GM12878 (cell line): ENCODE measurements at regions of chr14 and their contacts with region 1.

Region 1: GRCh38 chr14:24093901-24094761 is at the start of gene PCK2:
- DNase-seq: no peak
- ATAC-seq: peak; percentile 79
- H3K4me3 ChIP-seq: peak within 1 kb of the TSS; percentile 98
- H3K27ac ChIP-seq: peak within 1 kb of the TSS; percentile 99
- H3K4me1 ChIP-seq: 0 out of 2 replicates have a peak, but pooled peaks cover 3% of the 10 kb centered on the region
- H3K27me3 ChIP-seq: no peaks in the 10 kb centered on the region
- CTCF ChIP-seq: no peak
- EP300 ChIP-seq: no peak
- POLR2A ChIP-seq: peak; percentile 91
- RAD21 ChIP-seq: no peak
- polyA plus RNA-seq, gene PCK2: 6.6 to 12.3 TPM

Region 2: GRCh38 chr14:24075485-24076301 is 18.4 kb before region 1 on chr14:
- CTCF ChIA-PET with region 1: interaction called, 71 read pairs
- POLR2A ChIA-PET with region 1: interaction called, 33 read pairs
- RAD21 ChIA-PET with region 1: interaction called, 39 read pairs
- SMC1A ChIA-PET with region 1: interaction called, 51 read pairs
- in situ Hi-C with region 1: no loop called
- intact Hi-C with region 1: no loop called
- DNase-seq: no peak
- ATAC-seq: peak; percentile 85
- H3K4me3 ChIP-seq: 0 out of 2 replicates have a peak overlapping the region, but pooled peaks have one; percentile 6
- H3K27ac ChIP-seq: 0 out of 2 replicates have a peak overlapping the region, but pooled peaks have one; percentile 9
- H3K4me1 ChIP-seq: peaks cover 24% of the 10 kb centered on the region
- H3K27me3 ChIP-seq: no peaks in the 10 kb centered on the region
- CTCF ChIP-seq: no peak
- EP300 ChIP-seq: no peak
- POLR2A ChIP-seq: no peak
- RAD21 ChIP-seq: no peak

Region 3: GRCh38 chr14:24080888-24081738 is 13.0 kb before region 1 on chr14:
- CTCF ChIA-PET with region 1: interaction called, 71 read pairs
- POLR2A ChIA-PET with region 1: interaction called, 33 read pairs
- RAD21 ChIA-PET with region 1: interaction called, 39 read pairs
- SMC1A ChIA-PET with region 1: interaction called, 51 read pairs
- in situ Hi-C with region 1: no loop called
- intact Hi-C with region 1: no loop called
- DNase-seq: no peak
- ATAC-seq: peak; percentile 95
- H3K4me3 ChIP-seq: peak overlapping the region; percentile 63; the same call in 1 of the 2 replicates
- H3K27ac ChIP-seq: peak overlapping the region; percentile 67
- H3K4me1 ChIP-seq: peaks cover 14% of the 10 kb centered on the region
- H3K27me3 ChIP-seq: no peaks in the 10 kb centered on the region
- CTCF ChIP-seq: no peak
- EP300 ChIP-seq: no peak
- POLR2A ChIP-seq: peak; percentile 77
- RAD21 ChIP-seq: no peak

Region 4: GRCh38 chr14:24135834-24136542 is 41.9 kb after region 1 on chr14 and contains the start of gene PSME1:
- CTCF ChIA-PET with region 1: interaction called, 4 read pairs
- POLR2A ChIA-PET with region 1: interaction called, 15 read pairs
- RAD21 ChIA-PET with region 1: interaction called, 12 read pairs
- SMC1A ChIA-PET with region 1: interaction called, 4 read pairs
- in situ Hi-C with region 1: no loop called
- intact Hi-C with region 1: no loop called
- DNase-seq: peak; percentile 75
- ATAC-seq: peak; percentile 94
- H3K4me3 ChIP-seq: peak within 1 kb of the TSS; percentile 99
- H3K27ac ChIP-seq: peak within 1 kb of the TSS; percentile 95
- H3K4me1 ChIP-seq: peaks cover 40% of the 10 kb centered on the region
- H3K27me3 ChIP-seq: no peaks in the 10 kb centered on the region
- CTCF ChIP-seq: no peak
- EP300 ChIP-seq: no peak
- POLR2A ChIP-seq: peak; percentile 86
- RAD21 ChIP-seq: no peak
- polyA plus RNA-seq, gene PSME1: 1,299 to 1,378 TPM

Region 5: GRCh38 chr14:24141097-24141880 is 47.2 kb after region 1 on chr14 and contains the start of gene EMC9:
- CTCF ChIA-PET with region 1: interaction called, 9 read pairs
- POLR2A ChIA-PET with region 1: interaction called, 38 read pairs
- RAD21 ChIA-PET with region 1: interaction called, 22 read pairs
- SMC1A ChIA-PET with region 1: interaction called, 18 read pairs
- in situ Hi-C with region 1: no loop called
- intact Hi-C with region 1: no loop called
- DNase-seq: peak; percentile 97
- ATAC-seq: peak; percentile 92
- H3K4me3 ChIP-seq: peak within 1 kb of the TSS; percentile 94
- H3K27ac ChIP-seq: peak within 1 kb of the TSS; percentile 93
- H3K4me1 ChIP-seq: peaks cover 40% of the 10 kb centered on the region
- H3K27me3 ChIP-seq: no peaks in the 10 kb centered on the region
- CTCF ChIP-seq: peak in 2 of 3 experiments; percentile 27 to 35; a peak in 4 of 6 replicates
- EP300 ChIP-seq: peak in 1 of 2 experiments; percentile 58; a peak in 2 of 4 replicates
- POLR2A ChIP-seq: peak; percentile 94
- RAD21 ChIP-seq: no peak
- polyA plus RNA-seq, gene EMC9: 15.5 to 17.8 TPM